ENCODE measurements at regions of chr16 and their contacts with region 1.

Region 1: GRCh38 chr16:47141773-47142485 is 1.8 kb downstream of the NETO2 start:
- DNase-seq: peak; percentile 93
- H3K4me3 Mint-ChIP-seq: peak overlapping the region; percentile 75
- H3K27ac Mint-ChIP-seq: no peak overlapping the region
- H3K4me1 Mint-ChIP-seq: peaks cover 10% of the 10 kb centered on the region
- H3K27me3 Mint-ChIP-seq: peaks cover 38% of the 10 kb centered on the region

Region 2: GRCh38 chr16:46689365-46690280 is 452.3 kb before region 1 on chr16 and contains the start of gene ORC6:
- CTCF ChIA-PET with region 1: interaction called, 4 read pairs
- intact Hi-C with region 1: loop called (anchors 10 kb)
- DNase-seq: peak; percentile 98
- H3K4me3 Mint-ChIP-seq: no peak within 1 kb of the TSS
- H3K27ac Mint-ChIP-seq: peak within 1 kb of the TSS; percentile 64
- H3K4me1 Mint-ChIP-seq: peaks cover 47% of the 10 kb centered on the region
- H3K27me3 Mint-ChIP-seq: no peaks in the 10 kb centered on the region
- total RNA-seq, gene ORC6: 57.7 to 61.9 TPM

Region 3: GRCh38 chr16:47045023-47045422 is 96.9 kb before region 1 on chr16:
- CTCF ChIA-PET with region 1: interaction called, 12 read pairs
- intact Hi-C with region 1: no loop called
- DNase-seq: no peak
- H3K4me3 Mint-ChIP-seq: no peak overlapping the region
- H3K27ac Mint-ChIP-seq: no peak overlapping the region
- H3K4me1 Mint-ChIP-seq: peaks cover 16% of the 10 kb centered on the region
- H3K27me3 Mint-ChIP-seq: no peaks in the 10 kb centered on the region

Region 4: GRCh38 chr16:47278306-47278970 is 136.5 kb after region 1 on chr16:
- CTCF ChIA-PET with region 1: no interaction called
- intact Hi-C with region 1: no loop called
- DNase-seq: no peak
- H3K4me3 Mint-ChIP-seq: no peak overlapping the region
- H3K27ac Mint-ChIP-seq: no peak overlapping the region
- H3K4me1 Mint-ChIP-seq: no peaks in the 10 kb centered on the region
- H3K27me3 Mint-ChIP-seq: no peaks in the 10 kb centered on the region

Region 5: GRCh38 chr16:47460711-47461597 is 319.0 kb after region 1 on chr16 and contains the starts of genes ITFG1 and PHKB:
- CTCF ChIA-PET with region 1: interaction called, 3 read pairs
- intact Hi-C with region 1: loop called (anchors 1 kb)
- DNase-seq: peak; percentile 93
- H3K4me3 Mint-ChIP-seq: peak within 1 kb of the TSS; percentile 92
- H3K27ac Mint-ChIP-seq: peak within 1 kb of the TSS; percentile 88
- H3K4me1 Mint-ChIP-seq: peaks cover 58% of the 10 kb centered on the region
- H3K27me3 Mint-ChIP-seq: no peaks in the 10 kb centered on the region
- total RNA-seq, gene ITFG1: 17.6 to 18.3 TPM
- total RNA-seq, gene PHKB: 22.5 to 25.3 TPM

Region 6: DNA sequence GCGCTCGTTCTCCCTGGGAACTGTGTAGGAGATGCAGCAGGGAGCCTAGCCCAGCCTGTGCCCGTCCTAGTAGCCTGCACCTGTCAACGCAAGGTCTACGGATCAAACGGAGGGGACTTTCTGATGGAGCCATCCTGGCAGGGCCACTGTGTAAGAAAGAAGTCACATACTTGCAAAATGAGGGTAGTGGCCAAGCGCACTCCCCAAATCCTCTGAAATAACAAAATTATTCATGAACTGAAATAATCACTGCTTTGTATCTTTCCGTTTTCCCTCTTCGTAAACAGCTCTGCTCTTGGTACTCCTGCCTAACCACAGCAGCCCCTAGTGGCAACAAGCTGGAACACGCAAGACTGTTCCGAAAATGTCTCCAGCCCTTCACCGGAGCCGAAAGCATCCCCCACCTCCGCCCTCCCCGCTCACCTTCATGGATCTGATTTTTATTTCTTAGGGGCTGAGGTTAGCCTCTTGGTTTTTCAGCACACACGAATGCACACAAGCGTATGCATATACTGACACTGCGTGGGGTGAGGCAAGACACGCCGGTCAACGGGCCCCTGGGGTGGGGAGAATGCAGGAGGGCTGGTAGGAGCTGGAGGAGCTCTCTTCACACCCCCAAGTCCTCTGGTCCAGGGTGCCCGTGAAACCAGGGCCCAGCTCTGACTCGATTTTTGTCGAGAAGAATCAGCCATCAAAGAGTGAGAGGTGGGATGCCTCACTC is 913.1 kb after region 1 on chr16:
- CTCF ChIA-PET with region 1: interaction called, 4 read pairs
- intact Hi-C with region 1: loop called (anchors 1 kb)
- DNase-seq: peak; percentile 55
- H3K4me3 Mint-ChIP-seq: no peak overlapping the region
- H3K27ac Mint-ChIP-seq: no peak overlapping the region
- H3K4me1 Mint-ChIP-seq: peaks cover 3% of the 10 kb centered on the region
- H3K27me3 Mint-ChIP-seq: peaks cover 29% of the 10 kb centered on the region

Region 7: GRCh38 chr16:48164907-48165726 is 1023.2 kb after region 1 on chr16:
- CTCF ChIA-PET with region 1: interaction called, 24 read pairs
- intact Hi-C with region 1: no loop called
- DNase-seq: peak; percentile 78
- H3K4me3 Mint-ChIP-seq: no peak overlapping the region
- H3K27ac Mint-ChIP-seq: peak overlapping the region; percentile 61
- H3K4me1 Mint-ChIP-seq: peaks cover 4% of the 10 kb centered on the region
- H3K27me3 Mint-ChIP-seq: peaks cover 13% of the 10 kb centered on the region

Measured in activated naive CD4-positive, alpha-beta T cell treated with anti-CD3 and anti-CD28 coated beads for 36 hours (primary cell).